ENCODE measurements at regions of chr9 and their contacts with region 1.

Region 1: DNA sequence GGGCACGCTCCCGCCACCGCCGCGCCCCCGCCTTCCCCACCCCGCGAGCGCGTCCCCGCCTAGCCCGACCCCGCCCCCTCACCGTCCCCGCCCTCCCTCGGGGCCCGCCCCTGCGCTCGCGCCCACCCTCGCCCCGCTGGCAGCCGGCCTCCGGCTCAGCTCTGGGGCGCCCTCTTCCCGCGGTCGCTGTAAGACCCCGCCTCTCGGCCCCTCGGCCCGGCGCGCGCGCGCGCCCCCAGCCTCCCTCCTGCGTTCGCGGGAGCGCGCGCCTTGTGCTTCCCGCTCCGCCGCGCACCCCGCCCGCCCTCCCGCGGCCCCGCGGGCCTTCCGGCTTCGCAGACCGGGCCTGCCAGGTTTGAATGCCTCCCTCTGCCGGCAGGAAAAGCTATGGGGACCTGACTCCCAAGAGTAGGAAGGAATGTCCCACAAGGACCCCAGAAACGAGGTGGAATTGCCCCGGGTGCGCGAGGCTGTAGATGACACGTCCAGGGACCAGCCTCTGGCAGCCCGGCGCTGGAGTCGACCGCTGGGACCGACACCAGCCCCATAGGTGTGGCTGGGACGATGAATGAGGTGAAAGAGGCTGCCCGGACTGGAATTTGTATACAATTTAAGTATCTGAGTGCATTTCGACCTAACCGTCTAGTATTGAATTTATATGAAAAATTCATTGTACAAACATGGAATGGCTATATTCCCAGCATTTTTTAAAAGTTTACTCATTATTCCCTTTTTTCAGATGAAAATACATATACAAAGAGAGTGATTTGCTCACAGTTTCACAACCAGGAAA is 416 bp upstream of the PTBP3 start:
- DNase-seq: peak; percentile 98

Region 2: GRCh38 chr9:112097712-112098688 is 235.8 kb before region 1 on chr9:
- intact Hi-C with region 1: loop called (anchors 2 kb)
- DNase-seq: no peak

Region 3: DNA sequence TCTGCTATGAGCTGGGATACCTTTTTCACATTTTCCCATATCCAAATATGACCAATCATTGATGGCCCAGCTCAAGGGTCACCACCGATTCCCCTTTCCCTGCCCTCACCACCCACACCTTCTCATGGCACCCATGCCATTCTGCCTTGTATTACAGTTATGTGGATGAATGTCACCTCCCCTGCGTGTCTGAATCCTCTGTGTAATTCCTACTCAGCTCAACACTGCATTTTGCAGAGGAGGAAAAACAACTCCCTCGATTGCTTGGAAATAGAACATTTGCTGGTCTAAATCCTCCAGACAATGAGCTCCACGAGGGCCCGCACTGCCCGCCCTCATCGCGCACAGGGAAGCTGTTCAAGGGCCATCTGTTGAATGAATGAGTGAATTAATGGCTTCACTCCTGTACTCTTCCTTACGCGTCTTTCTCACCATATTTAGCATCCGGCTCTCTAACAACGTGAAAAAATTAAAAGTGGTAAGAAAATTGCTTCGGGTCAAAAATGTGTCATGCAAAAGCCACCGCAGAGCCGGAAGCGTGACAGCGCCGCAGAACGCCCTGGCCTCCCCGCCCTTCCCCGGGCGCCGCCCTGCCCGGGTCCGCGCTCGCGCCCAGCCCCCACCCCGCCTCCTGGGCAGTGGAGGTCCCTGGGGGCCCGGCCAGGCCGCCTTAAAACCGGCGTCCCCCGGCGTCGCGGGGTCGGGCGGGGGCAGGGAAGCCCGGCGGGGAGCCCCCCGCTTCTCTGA is 159.4 kb before region 1 on chr9:
- intact Hi-C with region 1: loop called (anchors 10 kb)
- DNase-seq: peak; percentile 87

Region 4: DNA sequence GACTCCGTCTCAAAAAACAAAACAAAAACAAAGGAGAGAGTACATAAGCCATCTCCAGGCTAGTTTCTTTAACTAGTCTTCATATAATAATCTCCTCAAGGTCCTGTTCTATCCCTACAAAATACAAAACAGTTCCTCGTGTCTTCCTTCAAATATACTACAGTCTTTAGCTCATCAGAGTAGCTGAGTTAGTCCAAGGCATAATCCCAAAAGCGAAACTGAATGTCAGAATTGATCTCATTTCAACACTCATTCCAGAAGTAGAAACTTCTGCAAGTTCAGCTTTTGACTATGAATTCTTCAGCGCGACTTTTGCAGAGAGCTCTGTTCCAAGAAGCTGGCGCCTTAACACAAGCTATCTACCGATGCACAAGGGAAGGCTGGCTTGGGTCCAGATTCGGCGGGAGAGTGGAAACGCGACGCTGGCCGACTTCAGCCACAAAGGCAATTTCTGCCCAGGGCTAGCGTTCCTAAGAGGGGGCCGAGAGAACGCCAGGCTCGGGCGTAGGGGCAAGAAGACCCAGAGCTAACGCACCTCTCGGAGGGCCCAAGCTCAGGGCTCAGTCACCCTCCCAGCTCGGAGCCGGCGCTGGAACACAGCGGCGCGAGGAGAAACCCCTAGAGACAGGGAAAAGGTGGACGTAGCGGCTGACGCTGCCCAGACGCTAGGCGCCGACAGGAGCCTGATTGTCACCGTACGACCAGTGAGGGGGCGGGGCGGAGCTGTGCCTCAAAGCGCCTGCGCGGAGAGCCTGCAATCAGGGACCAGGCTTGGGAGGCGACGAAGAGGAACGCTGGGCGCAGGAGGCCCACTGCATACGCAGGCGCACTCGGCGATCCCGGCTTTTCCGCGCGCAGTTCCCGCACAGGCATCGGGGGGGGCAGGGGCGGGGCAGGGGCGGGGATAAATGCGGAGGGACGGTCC is 45.6 kb after region 1 on chr9:
- intact Hi-C with region 1: loop called (anchors 5 kb)
- DNase-seq: peak; percentile 100

Region 5: DNA sequence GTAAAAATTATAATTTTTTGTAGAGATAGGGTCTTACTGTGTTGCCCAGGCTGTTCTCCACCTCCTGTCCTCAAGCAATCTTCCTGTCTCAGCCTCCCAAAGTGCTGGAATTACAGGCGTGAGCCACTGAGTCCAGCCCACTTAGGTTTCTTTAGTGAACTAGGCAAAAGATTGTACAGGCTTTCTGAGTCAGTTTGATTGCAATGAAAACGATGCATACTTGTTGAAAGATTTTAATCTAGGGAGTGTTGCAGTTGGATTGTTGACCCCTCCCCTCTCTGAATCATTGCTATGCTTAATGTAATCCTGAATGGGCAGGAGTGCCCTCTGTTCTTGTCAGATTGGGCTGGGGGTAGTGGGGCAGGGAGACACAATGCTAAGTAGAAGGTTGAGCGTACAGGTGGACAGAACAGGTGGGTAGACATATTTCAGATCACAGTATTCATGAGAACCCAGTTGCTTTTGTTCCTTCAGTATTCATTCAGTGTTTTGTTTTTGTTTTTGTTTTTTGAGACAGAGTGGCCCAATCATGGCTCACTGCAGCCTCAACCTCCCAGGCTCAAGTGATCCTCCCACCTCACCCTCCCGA is 222.8 kb after region 1 on chr9:
- intact Hi-C with region 1: no loop called
- DNase-seq: no peak

Region 6: GRCh38 chr9:112764344-112764743 is 430.5 kb after region 1 on chr9:
- intact Hi-C with region 1: no loop called
- DNase-seq: no peak